ENCODE measurements at regions of chr10 and their contacts with region 1.

Region 1: GRCh38 chr10:11515596-11516430 is 95.6 kb downstream of the USP6NL start:
- DNase-seq: no peak
- H3K4me3 ChIP-seq: no peak overlapping the region
- H3K27ac ChIP-seq: no peak overlapping the region
- H3K4me1 ChIP-seq: no peaks in the 10 kb centered on the region
- H3K27me3 ChIP-seq: no peaks in the 10 kb centered on the region
- CTCF ChIP-seq: peak; percentile 64 to 79 (median 73)

Region 2: GRCh38 chr10:11367505-11367904 is 148.3 kb before region 1 on chr10:
- intact Hi-C with region 1: no loop called
- DNase-seq: no peak
- H3K4me3 ChIP-seq: no peak overlapping the region
- H3K27ac ChIP-seq: no peak overlapping the region
- H3K4me1 ChIP-seq: no peaks in the 10 kb centered on the region
- H3K27me3 ChIP-seq: no peaks in the 10 kb centered on the region
- CTCF ChIP-seq: no peak

Region 3: GRCh38 chr10:11684717-11685645 is 169.2 kb after region 1 on chr10:
- intact Hi-C with region 1: no loop called
- DNase-seq: peak; percentile 25 to 82
- H3K4me3 ChIP-seq: peak overlapping the region; percentile 43 to 55
- H3K27ac ChIP-seq: peak overlapping the region; percentile 62 to 79
- H3K4me1 ChIP-seq: peaks cover 2 to 6% of the 10 kb centered on the region in 2 donors
- H3K27me3 ChIP-seq: no peaks in the 10 kb centered on the region
- CTCF ChIP-seq: no peak

Region 4: DNA sequence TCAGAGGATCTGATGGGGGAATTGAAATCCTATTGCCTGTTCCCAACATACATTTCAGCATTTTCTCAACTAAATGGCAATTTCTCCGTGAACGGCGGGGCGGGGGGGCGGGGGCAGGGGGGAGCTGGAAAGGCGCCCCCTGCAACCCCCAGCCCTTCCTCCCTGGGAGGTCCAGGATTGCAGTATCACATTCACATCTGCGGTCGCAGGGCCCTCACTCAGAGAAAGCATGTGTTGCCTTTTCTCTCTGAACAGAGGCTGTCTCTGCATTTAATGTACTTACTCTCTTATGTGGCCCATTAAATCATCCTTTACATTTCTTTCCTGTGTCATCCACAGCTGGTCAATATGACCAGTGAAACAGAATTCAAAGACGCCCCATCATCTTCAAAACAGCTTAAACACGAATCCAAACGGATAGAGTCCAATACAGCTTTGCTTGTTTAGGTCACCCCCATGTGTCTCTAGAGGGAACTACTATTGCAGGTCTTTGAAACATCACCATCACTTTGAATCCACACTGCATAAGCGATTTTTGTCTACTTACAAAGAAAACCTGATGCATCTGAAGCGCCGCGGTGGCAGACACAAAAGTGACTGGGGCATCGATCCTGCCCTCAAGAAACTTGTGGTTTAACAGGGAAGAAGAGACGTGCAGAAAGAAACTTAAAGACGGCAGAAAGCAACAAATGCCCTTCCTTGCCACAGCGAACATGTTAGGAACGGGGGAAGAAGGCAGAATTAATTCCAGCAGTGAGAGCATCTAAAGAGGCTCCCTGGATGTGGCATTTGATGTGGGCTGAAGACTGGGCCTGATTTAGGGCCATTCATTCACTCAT is 209.3 kb after region 1 on chr10:
- intact Hi-C with region 1: loop called (anchors 5 kb)
- DNase-seq: no peak
- H3K4me3 ChIP-seq: no peak overlapping the region
- H3K27ac ChIP-seq: no peak overlapping the region
- H3K4me1 ChIP-seq: no peaks in the 10 kb centered on the region
- H3K27me3 ChIP-seq: no peaks in the 10 kb centered on the region
- CTCF ChIP-seq: peak; percentile 52 to 66 (median 62)

Region 5: DNA sequence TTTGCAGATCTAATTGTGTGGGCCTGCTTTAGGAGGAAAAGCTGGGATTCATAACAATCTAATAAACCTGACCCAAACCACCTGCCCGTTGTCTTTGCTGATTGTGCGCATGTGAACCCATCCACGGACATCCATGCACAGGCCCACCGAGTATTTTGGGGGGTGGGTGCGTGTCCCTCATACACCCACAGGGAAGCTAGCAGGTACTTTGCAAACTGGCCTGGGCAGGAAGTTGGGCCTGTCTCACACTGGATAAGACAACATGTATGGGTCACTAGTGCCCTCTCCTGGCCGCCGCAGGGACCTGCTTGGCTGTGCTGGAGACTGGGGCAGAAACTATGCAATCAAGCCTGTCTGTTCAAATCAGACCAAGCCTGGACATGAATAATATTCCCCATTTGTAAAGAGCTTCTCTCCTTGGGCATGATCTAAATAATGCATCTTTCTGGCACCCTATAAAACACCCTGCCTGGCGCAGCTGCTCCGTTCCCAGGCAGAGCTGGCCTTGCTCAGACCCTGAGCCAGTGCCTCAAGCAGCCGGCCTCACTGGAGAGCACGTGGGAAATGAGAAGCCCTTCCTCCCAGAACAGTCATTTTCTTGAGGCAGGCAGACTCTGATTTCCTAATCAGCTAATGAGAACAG is 242.1 kb after region 1 on chr10:
- intact Hi-C with region 1: loop called (anchors 1 kb)
- DNase-seq: peak; percentile 67 to 92
- H3K4me3 ChIP-seq: no peak overlapping the region
- H3K27ac ChIP-seq: peak overlapping the region; percentile 54 to 85
- H3K4me1 ChIP-seq: peaks cover 8% of the 10 kb centered on the region in 2 donors
- H3K27me3 ChIP-seq: no peaks in the 10 kb centered on the region
- CTCF ChIP-seq: peak; percentile 86 to 95 (median 87)

Measured in ascending aorta (tissue), 2 donors.